ENCODE measurements at regions of chr12 and their contacts with region 1.

Region 1: DNA sequence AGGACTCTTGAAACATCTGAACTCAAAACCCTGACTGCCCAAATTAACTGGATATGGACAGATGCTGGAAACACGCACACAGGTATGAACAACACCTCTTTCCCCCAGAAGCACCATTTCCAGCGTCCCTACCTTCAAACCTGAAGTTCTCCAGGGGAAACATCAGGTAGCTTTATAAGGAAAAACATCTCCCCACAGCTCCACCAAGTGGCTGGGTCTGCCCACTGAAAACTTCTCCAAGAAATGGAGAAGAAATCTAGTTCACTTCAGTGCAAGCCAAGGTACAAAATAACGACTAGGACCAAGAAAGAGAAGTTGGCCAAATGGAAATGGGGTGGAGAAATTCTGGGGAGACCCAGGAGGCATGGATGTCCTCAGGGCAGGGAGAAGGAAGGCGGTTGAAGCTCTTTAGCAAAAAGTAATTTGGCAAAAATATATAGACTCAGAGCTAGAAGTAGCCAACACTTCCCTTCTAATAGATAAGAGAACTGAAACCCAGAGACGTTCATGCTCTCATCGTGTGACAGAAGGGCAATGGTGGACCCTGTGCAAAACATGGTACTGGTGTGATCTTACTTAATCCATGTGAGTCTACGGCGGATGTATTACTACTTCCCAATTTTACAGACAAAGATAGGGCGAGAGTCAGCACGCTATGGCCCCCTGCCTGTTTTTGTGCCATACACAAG is 10.5 kb upstream of the NUAK1 start:
- DNase-seq: peak; percentile 22
- H3K4me3 ChIP-seq: no peak overlapping the region
- H3K27ac ChIP-seq: no peak overlapping the region
- H3K4me1 ChIP-seq: no peaks in the 10 kb centered on the region
- H3K27me3 ChIP-seq: no peaks in the 10 kb centered on the region
- CTCF ChIP-seq: peak; percentile 69

Region 2: GRCh38 chr12:105580821-105581352 is 568.4 kb before region 1 on chr12:
- CTCF ChIA-PET with region 1: interaction called, 10 read pairs
- POLR2A ChIA-PET with region 1: no interaction called
- intact Hi-C with region 1: no loop called
- DNase-seq: peak; percentile 50
- H3K4me3 ChIP-seq: no peak overlapping the region
- H3K27ac ChIP-seq: no peak overlapping the region
- H3K4me1 ChIP-seq: no peaks in the 10 kb centered on the region
- H3K27me3 ChIP-seq: peaks cover 9% of the 10 kb centered on the region
- CTCF ChIP-seq: no peak

Region 3: GRCh38 chr12:106078358-106079010 is 70.8 kb before region 1 on chr12:
- CTCF ChIA-PET with region 1: no interaction called
- POLR2A ChIA-PET with region 1: no interaction called
- intact Hi-C with region 1: no loop called
- DNase-seq: no peak
- H3K4me3 ChIP-seq: no peak overlapping the region
- H3K27ac ChIP-seq: no peak overlapping the region
- H3K4me1 ChIP-seq: no peaks in the 10 kb centered on the region
- H3K27me3 ChIP-seq: no peaks in the 10 kb centered on the region
- CTCF ChIP-seq: no peak

Measured in A673 (cell line).